B cell (primary cell): ENCODE measurements at regions of chr21 and their contacts with region 1.

Region 1: GRCh38 chr21:28154121-28154520 is 838.6 kb downstream of the LTN1 start:
- DNase-seq: no peak
- ATAC-seq: no peak
- H3K4me3 ChIP-seq: no peak overlapping the region
- H3K4me3 Mint-ChIP-seq: no peak overlapping the region
- H3K27ac ChIP-seq: no peak overlapping the region
- H3K27ac Mint-ChIP-seq: no peak overlapping the region
- H3K4me1 ChIP-seq: no peaks in the 10 kb centered on the region
- H3K4me1 Mint-ChIP-seq: no peaks in the 10 kb centered on the region
- H3K27me3 ChIP-seq: no peaks in the 10 kb centered on the region
- H3K27me3 Mint-ChIP-seq: no peaks in the 10 kb centered on the region
- CTCF ChIP-seq: no peak

Region 2: GRCh38 chr21:27423038-27423437 is 731.1 kb before region 1 on chr21:
- CTCF ChIA-PET with region 1: no interaction called
- POLR2A ChIA-PET with region 1: no interaction called
- intact Hi-C with region 1: no loop called
- DNase-seq: no peak
- ATAC-seq: no peak
- H3K4me3 ChIP-seq: no peak overlapping the region
- H3K4me3 Mint-ChIP-seq: no peak overlapping the region
- H3K27ac ChIP-seq: no peak overlapping the region
- H3K27ac Mint-ChIP-seq: no peak overlapping the region
- H3K4me1 ChIP-seq: no peaks in the 10 kb centered on the region
- H3K4me1 Mint-ChIP-seq: no peaks in the 10 kb centered on the region
- H3K27me3 ChIP-seq: no peaks in the 10 kb centered on the region
- H3K27me3 Mint-ChIP-seq: no peaks in the 10 kb centered on the region
- CTCF ChIP-seq: no peak

Region 3: GRCh38 chr21:28104346-28104745 is 49.8 kb before region 1 on chr21:
- CTCF ChIA-PET with region 1: no interaction called
- POLR2A ChIA-PET with region 1: no interaction called
- intact Hi-C with region 1: loop called (anchors 10 kb)
- DNase-seq: no peak
- ATAC-seq: no peak
- H3K4me3 ChIP-seq: no peak overlapping the region
- H3K4me3 Mint-ChIP-seq: no peak overlapping the region
- H3K27ac ChIP-seq: no peak overlapping the region
- H3K27ac Mint-ChIP-seq: no peak overlapping the region
- H3K4me1 ChIP-seq: no peaks in the 10 kb centered on the region
- H3K4me1 Mint-ChIP-seq: no peaks in the 10 kb centered on the region
- H3K27me3 ChIP-seq: no peaks in the 10 kb centered on the region
- H3K27me3 Mint-ChIP-seq: no peaks in the 10 kb centered on the region
- CTCF ChIP-seq: no peak